Activated CD8-positive, alpha-beta T cell treated with anti-CD3 and anti-CD28 coated beads for 36 hours (primary cell): ENCODE measurements at regions of chr16 and their contacts with region 1.

Region 1: GRCh38 chr16:69339289-69340108 is at the starts of genes COG8 and NIP7:
- DNase-seq: peak; percentile 96
- ATAC-seq: peak; percentile 92
- H3K4me3 Mint-ChIP-seq: peak within 1 kb of the TSS; percentile 97
- H3K27ac Mint-ChIP-seq: peak within 1 kb of the TSS; percentile 99
- H3K4me1 Mint-ChIP-seq: peaks cover 51% of the 10 kb centered on the region
- H3K27me3 Mint-ChIP-seq: no peaks in the 10 kb centered on the region
- CTCF ChIP-seq: peak; percentile 70
- total RNA-seq, gene COG8: 26.0 to 27.4 TPM
- total RNA-seq, gene NIP7: 37.7 to 41.8 TPM

Region 2: GRCh38 chr16:69209735-69210134 is 129.8 kb before region 1 on chr16:
- CTCF ChIA-PET with region 1: no interaction called
- POLR2A ChIA-PET with region 1: no interaction called
- intact Hi-C with region 1: no loop called
- DNase-seq: no peak
- ATAC-seq: no peak
- H3K4me3 Mint-ChIP-seq: no peak overlapping the region
- H3K27ac Mint-ChIP-seq: no peak overlapping the region
- H3K4me1 Mint-ChIP-seq: peaks cover 6% of the 10 kb centered on the region
- H3K27me3 Mint-ChIP-seq: no peaks in the 10 kb centered on the region
- CTCF ChIP-seq: no peak

Region 3: DNA sequence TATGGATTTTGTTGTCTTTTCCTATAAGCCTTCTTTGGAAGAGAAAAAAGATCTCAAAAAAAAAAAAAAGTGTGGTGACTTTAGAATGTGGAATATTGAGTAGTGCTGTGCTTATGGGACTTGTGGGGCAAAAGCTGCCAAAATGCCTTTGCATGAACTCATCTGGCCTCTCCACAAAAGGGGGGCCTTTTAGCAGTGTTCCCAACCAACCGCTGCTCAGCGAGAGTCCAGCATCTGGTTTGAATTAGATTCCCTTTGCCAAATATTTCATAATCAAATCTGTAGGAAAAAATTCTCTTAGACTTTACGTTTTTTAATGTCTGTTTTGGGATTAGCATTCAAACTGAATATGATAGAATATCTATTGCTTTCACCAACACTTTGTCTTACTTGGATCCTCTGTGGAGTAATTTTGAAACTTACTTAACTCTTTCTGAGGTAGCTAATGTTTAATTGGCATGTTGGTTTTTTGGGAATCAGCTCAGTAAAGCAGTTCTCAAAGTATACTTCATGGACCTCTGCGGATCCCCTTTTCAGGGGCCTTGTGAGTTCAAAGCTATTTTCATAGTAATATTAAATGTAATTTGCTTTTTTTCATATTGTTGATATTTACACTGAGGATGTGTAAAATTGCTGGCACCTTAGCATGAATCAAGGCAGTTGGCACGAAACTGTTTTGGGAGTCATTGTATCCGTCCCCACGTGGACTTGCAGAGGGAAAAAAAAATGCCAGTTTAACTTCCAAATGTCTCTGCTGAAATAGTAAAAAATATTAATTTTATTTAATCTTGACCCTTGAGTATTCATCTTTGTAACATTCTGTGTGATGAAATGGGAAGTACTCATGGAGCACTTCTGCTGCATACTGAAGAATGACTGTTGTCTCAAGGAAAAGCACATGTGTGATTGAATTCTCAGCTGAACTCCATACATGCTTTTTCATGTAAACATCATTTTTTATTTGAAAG is 63.1 kb before region 1 on chr16:
- CTCF ChIA-PET with region 1: no interaction called
- POLR2A ChIA-PET with region 1: no interaction called
- intact Hi-C with region 1: no loop called
- DNase-seq: no peak
- ATAC-seq: no peak
- H3K4me3 Mint-ChIP-seq: no peak overlapping the region
- H3K27ac Mint-ChIP-seq: no peak overlapping the region
- H3K4me1 Mint-ChIP-seq: no peaks in the 10 kb centered on the region
- H3K27me3 Mint-ChIP-seq: no peaks in the 10 kb centered on the region
- CTCF ChIP-seq: no peak

Region 4: GRCh38 chr16:69324013-69324531 is 15.4 kb before region 1 on chr16:
- CTCF ChIA-PET with region 1: interaction called, 28 read pairs
- POLR2A ChIA-PET with region 1: interaction called, 72 read pairs
- intact Hi-C with region 1: no loop called
- DNase-seq: no peak
- ATAC-seq: no peak
- H3K4me3 Mint-ChIP-seq: no peak overlapping the region
- H3K27ac Mint-ChIP-seq: no peak overlapping the region
- H3K4me1 Mint-ChIP-seq: peaks cover 38% of the 10 kb centered on the region
- H3K27me3 Mint-ChIP-seq: no peaks in the 10 kb centered on the region
- CTCF ChIP-seq: no peak

Region 5: DNA sequence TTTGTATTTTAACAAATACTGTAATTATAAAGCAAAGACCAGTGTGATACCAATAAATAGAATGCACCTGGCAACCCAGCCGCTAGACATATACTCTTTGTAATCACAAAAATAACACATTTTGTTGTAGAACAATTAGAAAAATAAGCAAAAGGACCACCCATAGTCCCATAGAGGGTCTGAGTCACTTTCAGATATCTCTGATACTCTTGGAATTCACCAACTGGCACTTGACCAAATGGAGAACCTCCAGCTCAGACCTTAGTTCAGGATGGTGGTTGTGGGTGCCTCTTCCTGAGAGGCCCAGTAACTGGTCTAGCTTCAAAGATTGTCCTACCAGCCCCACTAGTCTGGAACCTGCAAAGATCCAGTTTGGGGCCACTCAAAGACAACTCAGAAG is 47.1 kb after region 1 on chr16:
- CTCF ChIA-PET with region 1: interaction called, 10 read pairs
- POLR2A ChIA-PET with region 1: interaction called, 4 read pairs
- intact Hi-C with region 1: no loop called
- DNase-seq: no peak
- ATAC-seq: no peak
- H3K4me3 Mint-ChIP-seq: peak overlapping the region; percentile 86
- H3K27ac Mint-ChIP-seq: peak overlapping the region; percentile 42
- H3K4me1 Mint-ChIP-seq: peaks cover 25% of the 10 kb centered on the region
- H3K27me3 Mint-ChIP-seq: no peaks in the 10 kb centered on the region
- CTCF ChIP-seq: no peak